ENCODE measurements at regions of chr11 and their contacts with region 1.

Region 1: DNA sequence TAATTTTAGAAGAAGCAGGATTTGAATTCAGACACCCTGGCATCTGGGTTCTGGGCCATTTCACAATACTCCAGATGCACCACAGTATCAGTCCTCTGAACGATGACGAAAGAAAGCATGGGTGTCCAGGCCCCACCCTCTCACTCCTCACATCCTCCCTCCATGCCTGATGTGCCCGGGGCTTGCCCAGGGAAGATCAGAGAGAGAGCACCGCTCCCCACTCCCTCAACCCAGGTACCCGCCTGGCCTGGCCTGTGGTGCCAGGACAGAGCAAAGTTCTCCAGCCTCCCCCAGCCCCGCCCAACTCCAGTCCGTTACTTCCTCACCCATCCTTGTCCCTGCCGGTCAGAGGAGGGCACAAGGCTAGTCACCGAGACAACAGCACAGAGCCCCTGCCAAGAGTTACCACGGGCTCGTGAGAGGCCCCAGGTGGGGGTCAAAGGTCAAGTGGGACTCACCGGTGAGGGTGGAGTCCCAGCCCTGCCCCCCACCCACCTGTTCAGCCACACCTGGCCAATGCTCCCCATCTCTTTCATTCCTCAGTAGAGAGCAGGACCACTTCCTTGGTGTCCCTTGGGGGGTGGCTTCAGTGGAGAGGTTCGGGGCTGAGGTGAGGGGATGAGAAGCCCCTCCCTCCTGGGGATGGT is 8.1 kb downstream of the BCL9L start:
- DNase-seq: peak; percentile 70
- ATAC-seq: peak; percentile 17
- H3K4me3 Mint-ChIP-seq: peak overlapping the region; percentile 80
- H3K27ac Mint-ChIP-seq: peak overlapping the region; percentile 96
- H3K4me1 Mint-ChIP-seq: peaks cover 88% of the 10 kb centered on the region
- H3K27me3 Mint-ChIP-seq: no peaks in the 10 kb centered on the region

Region 2: GRCh38 chr11:118870396-118871345 is 46.9 kb before region 1 on chr11:
- CTCF ChIA-PET with region 1: interaction called, 3 read pairs
- POLR2A ChIA-PET with region 1: interaction called, 13 read pairs
- DNase-seq: no peak
- ATAC-seq: peak; percentile 49
- H3K4me3 Mint-ChIP-seq: peak overlapping the region; percentile 75
- H3K27ac Mint-ChIP-seq: peak overlapping the region; percentile 98
- H3K4me1 Mint-ChIP-seq: peaks cover 54% of the 10 kb centered on the region
- H3K27me3 Mint-ChIP-seq: no peaks in the 10 kb centered on the region

Region 3: GRCh38 chr11:118988280-118988679 is 70.7 kb after region 1 on chr11:
- CTCF ChIA-PET with region 1: no interaction called
- POLR2A ChIA-PET with region 1: no interaction called
- DNase-seq: no peak
- ATAC-seq: no peak
- H3K4me3 Mint-ChIP-seq: no peak overlapping the region
- H3K27ac Mint-ChIP-seq: no peak overlapping the region
- H3K4me1 Mint-ChIP-seq: no peaks in the 10 kb centered on the region
- H3K27me3 Mint-ChIP-seq: no peaks in the 10 kb centered on the region

Measured in activated CD8-positive, alpha-beta T cell treated with anti-CD3 and anti-CD28 coated beads, Interleukin-2, amount 10 ng/mL, durations not matched to agents 7 days and 5 days (primary cell).